Right ventricle myocardium inferior (tissue), 1 donor: ENCODE measurements at regions of chr3 and their contacts with region 1.

Region 1: DNA sequence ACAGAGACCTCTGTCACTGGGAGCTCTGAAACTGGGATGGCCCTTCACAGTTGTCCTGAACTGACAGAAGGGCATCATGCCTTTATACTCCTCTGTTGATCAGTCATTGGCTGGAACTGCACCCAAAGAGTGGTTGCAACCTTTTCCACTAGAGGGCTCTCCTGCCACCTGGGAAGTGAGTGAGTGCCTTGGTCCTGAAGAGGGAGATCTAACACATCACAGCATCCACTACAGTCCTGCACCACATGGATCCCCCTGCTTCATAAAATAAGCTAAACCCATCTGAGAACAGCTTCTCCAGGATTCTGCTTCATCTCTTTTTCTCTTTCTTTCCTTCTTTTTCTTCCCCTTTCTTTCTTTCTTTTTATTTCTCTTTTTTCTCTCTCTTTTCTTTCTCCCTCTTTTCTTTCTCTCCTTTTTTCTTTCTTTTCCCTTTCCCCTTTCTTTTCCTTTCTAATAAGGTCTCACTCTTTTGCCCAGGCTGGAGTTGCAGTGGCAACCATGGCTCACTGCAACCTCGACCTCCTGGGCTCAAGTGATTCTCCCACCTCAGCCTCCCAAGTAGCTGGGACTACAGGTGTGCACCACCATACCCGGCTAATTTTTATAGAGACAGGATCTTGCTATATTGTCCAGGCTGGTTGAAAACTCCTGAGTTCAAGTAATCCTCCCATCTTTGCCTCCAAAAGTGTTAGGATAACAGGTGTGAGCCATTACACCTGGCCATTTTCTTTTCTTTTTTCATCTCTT is 42.8 kb upstream of the RAF1 start:
- DNase-seq: no peak
- ATAC-seq: peak; percentile 85

Region 2: DNA sequence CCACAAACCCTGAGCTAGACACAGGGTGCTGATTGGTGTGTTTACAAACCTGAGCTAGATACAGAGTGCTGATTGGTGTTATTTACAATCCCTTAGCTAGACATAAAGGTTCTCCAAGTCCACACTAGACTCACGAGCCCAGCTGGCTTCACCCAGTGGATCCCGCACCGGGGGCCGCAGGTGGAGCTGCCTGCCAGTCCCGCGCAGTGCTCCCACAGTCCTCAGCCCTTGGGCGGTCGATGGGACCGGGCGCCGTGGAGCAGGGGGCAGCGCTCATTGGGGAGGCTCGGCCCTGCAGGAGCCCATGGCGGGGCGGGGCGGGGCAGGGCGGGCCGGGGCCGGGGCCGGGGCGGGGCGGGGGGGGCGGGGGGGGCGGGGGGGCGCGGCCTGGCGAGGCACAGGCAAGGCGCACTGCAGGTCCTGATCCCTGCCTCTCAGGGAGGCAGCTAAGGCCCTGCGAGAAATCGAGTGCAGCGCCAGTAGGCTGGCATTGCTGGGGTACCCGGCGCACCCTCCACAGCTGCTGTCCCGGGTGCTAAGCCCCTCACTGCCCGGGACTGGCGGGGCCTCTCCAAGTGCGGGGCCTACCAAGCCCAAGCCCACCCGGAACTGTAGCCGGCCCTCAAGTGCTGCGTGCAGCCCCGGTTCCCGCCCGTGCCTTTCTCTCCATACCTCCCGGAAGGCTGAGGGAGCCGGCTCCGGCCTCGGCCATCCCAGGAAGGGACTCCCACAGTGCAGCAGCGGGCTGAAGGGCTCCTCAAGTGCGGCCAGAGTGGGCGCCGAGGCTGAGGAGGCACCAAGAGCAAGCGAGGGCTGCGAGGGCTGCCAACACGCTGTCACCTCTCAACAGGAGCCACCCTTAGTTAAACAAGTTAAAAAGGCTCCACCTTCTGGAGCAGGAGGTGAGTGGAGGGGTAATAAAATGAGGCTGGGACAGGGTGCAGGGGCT is 62.2 kb after region 1 on chr3:
- intact Hi-C with region 1: loop called (anchors 5 kb)
- DNase-seq: no peak
- ATAC-seq: peak; percentile 37

Region 3: DNA sequence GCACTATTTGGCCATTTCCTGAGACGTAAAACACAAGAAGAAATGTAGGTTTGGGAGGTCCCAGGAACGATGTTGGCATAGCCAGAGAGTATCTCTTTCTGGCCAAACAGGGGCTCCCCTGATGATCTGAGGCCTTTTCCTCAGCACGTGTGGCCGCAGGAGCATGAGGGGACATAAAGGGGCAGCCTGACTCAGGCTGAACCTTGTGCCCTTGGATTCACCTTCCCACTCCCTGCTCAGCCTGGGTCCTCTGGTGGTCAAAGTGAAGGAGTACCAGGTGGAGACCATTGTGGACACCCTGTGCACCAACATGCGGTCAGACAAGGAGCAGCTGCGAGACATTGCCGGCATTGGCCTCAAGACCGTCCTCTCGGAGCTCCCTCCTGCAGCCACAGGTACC is 100.4 kb after region 1 on chr3:
- intact Hi-C with region 1: loop called (anchors 5 kb)
- DNase-seq: no peak
- ATAC-seq: no peak

Region 4: DNA sequence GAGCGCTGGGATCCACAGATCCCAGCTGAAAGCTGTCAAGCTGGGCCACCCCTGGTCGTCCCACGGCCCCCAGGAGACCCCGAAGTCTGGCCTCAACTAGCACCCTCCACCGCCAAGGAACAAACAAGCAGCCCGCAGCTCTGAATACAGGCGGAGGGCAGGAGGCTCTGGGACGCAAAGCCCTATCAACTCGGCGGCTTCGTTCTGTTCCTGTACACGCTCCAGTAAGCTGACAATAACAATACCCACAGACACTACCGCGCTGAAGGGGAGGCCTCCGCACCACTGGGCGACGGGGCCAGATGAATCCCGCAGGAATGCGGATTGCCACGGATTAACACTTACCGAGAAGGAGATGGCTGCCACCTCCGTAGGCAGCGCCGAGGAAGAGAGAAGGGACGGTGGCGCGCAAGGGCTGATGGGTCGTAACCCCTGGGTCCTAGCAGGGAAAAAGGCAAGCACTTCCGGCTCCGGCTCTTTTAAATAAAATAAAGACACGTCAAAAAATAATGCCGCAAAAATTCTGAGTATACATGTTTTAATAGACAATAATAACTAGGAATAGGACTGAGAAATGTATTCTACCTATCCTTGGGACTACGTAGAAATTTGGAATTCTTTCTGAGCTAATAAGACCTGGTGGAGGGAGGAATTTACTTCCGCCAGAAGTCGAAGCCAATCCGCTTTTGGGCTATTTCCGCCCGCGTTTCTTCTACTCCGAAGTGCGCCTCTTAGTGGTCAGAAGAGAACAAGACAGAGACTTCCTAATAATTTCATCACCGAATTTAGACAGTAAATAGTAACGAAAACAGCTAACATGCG is 134.7 kb after region 1 on chr3 and contains the start of gene RPL32:
- intact Hi-C with region 1: loop called (anchors 5 kb)
- DNase-seq: peak; percentile 94
- ATAC-seq: peak; percentile 96
- total RNA-seq, gene RPL32: 953 TPM

Region 5: DNA sequence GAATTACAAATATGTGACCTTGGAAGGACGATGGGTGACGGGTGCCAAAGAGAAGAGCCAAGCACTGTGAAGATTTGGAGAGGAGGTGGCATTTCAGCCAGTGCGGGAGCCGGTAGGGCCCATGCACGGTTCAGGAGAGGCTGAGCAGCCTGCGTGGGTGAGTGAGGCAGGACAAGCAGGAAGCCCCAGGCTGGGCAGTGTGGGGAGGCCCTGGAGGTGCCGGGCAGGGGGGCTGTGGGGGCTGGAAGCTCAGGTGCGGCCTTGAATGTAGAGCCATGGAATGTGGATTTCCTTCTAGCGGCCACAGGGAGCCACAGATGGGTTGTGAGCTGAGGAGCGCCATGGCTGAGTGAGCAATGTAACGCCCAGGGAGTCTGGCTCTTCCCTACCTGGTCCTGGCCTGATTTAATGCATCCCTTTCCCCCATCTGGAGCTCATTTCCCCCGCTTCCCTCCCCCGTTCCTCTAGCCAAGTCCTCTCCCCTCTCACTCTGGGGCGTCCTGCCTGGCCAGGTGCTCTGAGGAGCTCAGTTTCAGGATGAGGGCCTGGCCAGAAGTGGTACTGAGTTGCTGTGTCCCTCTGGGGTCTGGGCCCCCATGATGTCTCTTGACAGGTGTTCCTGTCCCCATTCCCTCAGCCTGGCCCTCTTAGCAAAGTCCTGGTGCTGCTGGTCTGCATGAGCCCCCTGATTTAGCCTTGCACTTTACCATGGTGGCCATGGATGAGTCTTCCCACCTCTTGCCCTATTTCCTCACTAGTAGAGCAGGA is 408.3 kb after region 1 on chr3:
- intact Hi-C with region 1: no loop called
- DNase-seq: peak; percentile 47
- ATAC-seq: no peak

Region 6: DNA sequence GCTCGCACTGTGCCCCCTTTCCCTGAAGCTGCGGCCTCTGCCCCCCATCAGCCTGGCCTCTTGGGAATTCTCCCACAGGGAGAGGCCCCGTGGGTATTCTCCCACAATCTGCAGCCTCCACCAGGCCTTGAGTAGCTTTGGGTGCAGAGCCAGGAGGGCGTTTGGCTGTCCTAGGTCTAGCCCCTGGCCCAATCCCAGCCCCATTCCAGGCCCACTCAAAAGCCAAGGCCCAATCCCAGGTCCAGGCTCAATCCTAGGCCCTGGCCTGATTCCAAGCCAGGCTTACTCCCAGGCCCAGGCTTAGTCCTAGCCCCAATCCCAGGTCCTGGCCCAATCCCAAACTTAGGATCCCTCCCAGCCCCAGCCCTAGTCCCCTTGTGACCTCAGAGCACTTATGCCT is 1358.2 kb after region 1 on chr3:
- intact Hi-C with region 1: no loop called
- DNase-seq: no peak
- ATAC-seq: no peak